Activated T-helper 2 cell treated with anti-CD3 and anti-CD28 coated beads, Interferon-gamma antibody, Interleukin-2, Interleukin-4, amounts not matched to agents 10 μg/mL and 5 μg/mL and 100 μg/mL, durations not matched to agents 14 hours and 24 hours and 36 hours (primary cell): ENCODE measurements at regions of chr2 and their contacts with region 1.

Region 1: GRCh38 chr2:240143801-240144648 is 3.6 kb upstream of the OTOS start:
- DNase-seq: peak; percentile 69
- H3K4me3 Mint-ChIP-seq: no peak overlapping the region
- H3K27ac Mint-ChIP-seq: no peak overlapping the region
- H3K4me1 Mint-ChIP-seq: no peaks in the 10 kb centered on the region
- H3K27me3 Mint-ChIP-seq: no peaks in the 10 kb centered on the region

Region 2: DNA sequence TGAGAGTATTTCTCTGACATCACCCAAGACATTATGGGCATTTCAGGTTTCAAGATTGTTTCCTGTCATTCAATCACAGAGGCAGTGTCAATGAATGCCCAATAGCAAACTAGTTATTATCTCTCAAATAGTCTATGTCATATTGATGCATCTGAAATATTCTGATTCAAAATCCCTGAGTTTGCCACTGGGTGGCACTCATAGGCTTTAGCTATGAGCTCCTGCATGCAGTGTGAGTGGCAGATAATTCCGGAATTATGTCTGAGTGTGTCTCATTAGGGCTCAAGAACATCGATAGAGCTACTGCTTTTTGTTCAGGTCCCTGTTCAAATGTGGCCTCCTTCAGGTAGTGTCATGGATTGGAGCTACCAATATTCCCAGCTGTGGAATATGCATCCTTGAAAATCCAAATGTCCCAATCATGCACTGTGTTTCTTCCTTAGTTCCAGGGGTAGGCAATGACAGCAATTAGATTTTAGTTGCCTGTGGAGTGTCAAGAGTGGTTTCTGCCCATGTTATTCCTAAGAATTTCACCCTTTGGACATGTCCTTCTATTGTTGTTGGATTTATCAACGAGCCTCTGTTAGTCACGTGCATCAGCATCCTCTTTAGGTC is 82.9 kb before region 1 on chr2:
- intact Hi-C with region 1: loop called (anchors 1 kb)
- DNase-seq: no peak
- H3K4me3 Mint-ChIP-seq: no peak overlapping the region
- H3K27ac Mint-ChIP-seq: no peak overlapping the region
- H3K4me1 Mint-ChIP-seq: peaks cover 3% of the 10 kb centered on the region
- H3K27me3 Mint-ChIP-seq: peaks cover 24% of the 10 kb centered on the region